Posterior vena cava (tissue), 2 donors: ENCODE measurements at regions of chr2 and their contacts with region 1.

Region 1: DNA sequence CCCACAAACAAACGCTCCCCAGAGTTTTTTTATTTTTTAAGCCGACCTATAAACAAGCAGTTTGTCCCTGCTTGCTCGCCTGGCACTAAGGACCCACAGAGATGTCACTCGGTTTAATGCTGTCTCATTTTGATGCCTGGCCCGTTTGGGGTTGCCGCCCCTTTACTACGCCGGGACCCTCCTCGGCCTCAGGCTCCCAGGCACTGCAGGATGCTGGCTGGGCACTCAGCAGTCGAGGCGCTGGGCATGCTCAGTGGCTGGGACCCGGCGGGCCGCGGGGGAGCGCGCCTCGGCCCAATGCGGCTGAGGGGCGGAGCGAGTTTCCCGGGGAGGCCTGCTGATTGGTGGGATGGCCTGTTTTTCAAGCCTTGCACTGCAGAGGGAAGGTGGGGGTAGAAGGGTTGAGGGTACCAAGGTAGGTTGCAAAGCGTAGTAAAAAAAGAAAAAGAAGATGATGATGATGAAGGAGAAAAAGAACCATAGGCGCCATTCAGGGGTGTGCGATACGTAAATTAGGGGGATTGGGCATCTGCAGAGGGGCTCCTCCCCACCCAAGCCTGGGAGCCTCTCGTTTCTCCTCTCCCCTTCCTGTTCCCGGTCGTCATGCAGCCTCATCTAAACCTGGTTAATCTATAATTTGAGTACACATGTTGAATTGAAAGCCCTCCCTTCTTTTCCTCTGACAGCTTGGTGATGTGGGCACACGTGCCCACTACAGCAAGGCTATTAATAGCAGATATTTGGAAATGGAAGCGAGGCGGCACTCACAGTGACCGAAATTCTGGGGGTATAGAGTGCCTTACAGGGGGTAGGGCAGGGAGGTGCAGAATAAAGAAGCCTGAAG is 1.5 kb upstream of the IRS1 start:
- DNase-seq: peak; percentile 91

Region 2: GRCh38 chr2:225889446-225889850 is 911.7 kb before region 1 on chr2:
- intact Hi-C with region 1: loop called in 1 of 2 experiments (anchors 10 kb)
- DNase-seq: no peak

Region 3: DNA sequence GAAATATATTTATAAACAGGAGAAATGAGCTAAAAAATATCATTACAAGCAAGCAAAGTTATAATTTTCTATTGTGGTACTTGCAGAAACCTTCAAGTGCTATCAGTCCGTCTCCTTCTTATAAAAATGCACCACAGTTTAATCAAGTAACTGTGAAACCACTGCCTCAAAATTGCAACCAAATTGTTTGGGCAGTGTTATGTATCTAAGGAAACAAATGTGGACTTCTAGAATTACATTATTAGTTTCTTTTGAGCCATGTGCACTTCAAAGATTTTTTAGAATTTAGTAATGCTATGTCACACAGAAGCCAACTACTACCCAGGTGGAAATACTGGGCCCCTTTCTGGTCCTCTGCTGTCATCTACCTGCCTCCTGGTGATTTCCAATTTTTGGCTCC is 906.0 kb before region 1 on chr2:
- intact Hi-C with region 1: loop called in 1 of 2 experiments (anchors 5 kb)
- DNase-seq: no peak

Region 4: GRCh38 chr2:226835796-226836547 is 34.8 kb after region 1 on chr2 and contains the start of gene RHBDD1:
- intact Hi-C with region 1: loop called in 1 of 2 experiments (anchors 2 kb)
- DNase-seq: peak; percentile 98
- total RNA-seq, gene RHBDD1: 39.3 to 40.5 TPM

Region 5: GRCh38 chr2:226984750-226985582 is 183.8 kb after region 1 on chr2:
- intact Hi-C with region 1: loop called in 1 of 2 experiments (anchors 10 kb)
- DNase-seq: no peak

Region 6: GRCh38 chr2:227228061-227228667 is 427.0 kb after region 1 on chr2:
- intact Hi-C with region 1: no loop called
- DNase-seq: no peak